ENCODE measurements at regions of chr7 and their contacts with region 1.

Region 1: DNA sequence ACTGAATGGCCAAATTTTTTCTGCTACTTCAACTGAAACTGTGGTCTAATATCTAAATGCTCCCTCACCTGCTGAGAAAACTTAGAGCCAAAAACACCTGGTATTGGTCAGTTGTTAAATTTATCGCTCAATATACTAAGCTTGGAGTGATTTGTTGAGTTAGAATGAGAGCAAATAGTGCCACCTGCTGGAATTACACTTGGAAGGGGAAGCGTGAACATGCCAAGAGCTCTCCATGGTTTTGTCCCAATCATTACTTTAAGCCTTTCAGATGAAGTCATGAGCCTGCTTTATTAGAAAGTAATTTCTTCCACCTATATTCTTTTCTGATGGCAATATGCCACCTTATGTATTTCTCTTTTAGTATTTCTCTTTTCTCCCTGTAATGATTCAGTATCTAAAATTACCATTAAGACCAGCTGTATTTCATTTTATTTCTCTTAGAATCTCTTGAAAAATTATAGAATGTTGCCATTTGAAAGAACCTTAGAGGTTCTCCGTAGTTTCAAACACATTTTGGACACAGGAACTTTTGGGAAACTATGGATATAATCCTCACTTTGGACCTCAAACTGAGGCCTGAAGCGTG is 447.8 kb upstream of the C7orf33 start:
- DNase-seq: peak; percentile 62
- H3K4me3 ChIP-seq: no peak overlapping the region
- H3K27ac ChIP-seq: no peak overlapping the region
- H3K4me1 ChIP-seq: peaks cover 0 to 16% of the 10 kb centered on the region in 2 experiments; a peak in 1 of 4 replicates
- H3K27me3 ChIP-seq: no peaks in the 10 kb centered on the region
- CTCF ChIP-seq: peak; percentile 95
- EP300 ChIP-seq: peak in 1 of 2 experiments; percentile 17; a peak in 1 of 4 replicates
- RAD21 ChIP-seq: peak; percentile 95

Region 2: DNA sequence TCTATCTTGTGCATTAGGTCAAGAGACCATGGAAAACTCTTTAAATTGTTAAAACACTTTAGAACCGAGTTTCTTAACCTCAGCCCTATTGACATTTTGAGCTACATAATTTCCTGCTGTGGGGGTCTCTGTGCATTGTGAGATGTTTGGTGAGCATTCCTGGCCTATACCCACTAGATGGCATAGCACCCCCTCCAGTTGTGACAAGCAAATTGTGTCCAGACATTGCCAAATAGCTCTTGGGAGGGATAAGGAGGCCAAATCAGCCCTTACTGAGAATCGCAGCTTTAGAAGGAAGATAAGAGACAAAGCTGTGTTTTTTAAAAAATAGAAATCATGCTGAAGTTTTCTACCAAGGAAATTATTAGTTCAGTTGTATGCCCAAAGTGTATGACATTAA is 710.7 kb before region 1 on chr7:
- CTCF ChIA-PET with region 1: interaction called, 68 read pairs
- POLR2A ChIA-PET with region 1: no interaction called
- DNase-seq: peak; percentile 61
- H3K4me3 ChIP-seq: no peak overlapping the region
- H3K27ac ChIP-seq: peak overlapping the region; percentile 20 to 23; a peak in 3 of 4 replicates
- H3K4me1 ChIP-seq: peaks cover 8 to 9% of the 10 kb centered on the region in 2 experiments; a peak in 3 of 4 replicates
- H3K27me3 ChIP-seq: no peaks in the 10 kb centered on the region
- CTCF ChIP-seq: peak; percentile 85
- EP300 ChIP-seq: 0 out of 4 replicates have a peak, but pooled peaks of 1 of the 2 experiments have one; percentile 11
- RAD21 ChIP-seq: peak; percentile 98

Region 3: DNA sequence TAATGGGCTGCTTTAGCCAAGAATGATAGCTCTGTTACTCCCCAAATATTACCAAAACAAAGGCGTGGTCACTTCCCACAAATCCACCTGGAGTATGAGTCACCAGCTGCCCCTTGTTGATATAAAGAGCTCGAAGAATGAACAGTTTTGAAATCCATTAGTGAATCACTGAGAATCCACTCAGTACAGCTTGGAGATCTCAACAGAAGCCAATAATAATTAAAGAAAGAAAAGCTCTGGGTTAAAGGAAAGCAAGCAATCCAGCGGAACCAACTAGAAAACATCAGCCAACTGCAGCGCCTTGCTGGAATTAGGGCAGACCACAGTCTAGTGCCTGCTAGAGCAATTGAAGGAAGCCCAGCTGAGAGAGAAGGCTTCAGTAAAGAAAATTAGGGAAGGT is 128.2 kb before region 1 on chr7:
- CTCF ChIA-PET with region 1: no interaction called
- POLR2A ChIA-PET with region 1: no interaction called
- DNase-seq: no peak
- H3K4me3 ChIP-seq: no peak overlapping the region
- H3K27ac ChIP-seq: no peak overlapping the region
- H3K4me1 ChIP-seq: no peaks in the 10 kb centered on the region; a peak in 1 of 4 replicates
- H3K27me3 ChIP-seq: no peaks in the 10 kb centered on the region
- CTCF ChIP-seq: no peak
- EP300 ChIP-seq: no peak
- RAD21 ChIP-seq: no peak

Region 4: GRCh38 chr7:148091882-148092281 is 50.9 kb before region 1 on chr7:
- CTCF ChIA-PET with region 1: interaction called, 10 read pairs
- POLR2A ChIA-PET with region 1: no interaction called
- DNase-seq: no peak
- H3K4me3 ChIP-seq: no peak overlapping the region
- H3K27ac ChIP-seq: no peak overlapping the region
- H3K4me1 ChIP-seq: no peaks in the 10 kb centered on the region
- H3K27me3 ChIP-seq: no peaks in the 10 kb centered on the region
- CTCF ChIP-seq: no peak
- EP300 ChIP-seq: no peak
- RAD21 ChIP-seq: no peak

Region 5: DNA sequence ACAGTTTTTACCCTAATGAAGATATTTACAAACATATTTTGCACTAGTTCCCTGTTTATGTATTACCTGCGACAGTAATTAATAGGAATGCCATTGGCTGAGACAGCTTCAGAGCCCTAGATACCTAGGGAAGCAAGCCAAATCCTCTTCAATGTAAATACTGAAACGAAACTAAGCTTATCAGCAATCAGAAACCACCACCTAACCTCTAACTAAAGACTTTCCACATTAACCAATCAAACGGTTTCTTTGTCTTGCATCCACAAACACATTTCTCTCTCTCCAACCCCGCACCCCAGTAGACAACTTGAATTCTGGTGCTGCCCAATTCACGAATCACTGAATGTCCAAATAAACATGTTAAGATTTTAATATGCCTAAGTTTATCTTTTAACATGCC is 26.6 kb before region 1 on chr7:
- CTCF ChIA-PET with region 1: interaction called, 20 read pairs
- POLR2A ChIA-PET with region 1: no interaction called
- DNase-seq: no peak
- H3K4me3 ChIP-seq: no peak overlapping the region
- H3K27ac ChIP-seq: no peak overlapping the region
- H3K4me1 ChIP-seq: peaks cover 0 to 7% of the 10 kb centered on the region in 2 experiments; a peak in 2 of 4 replicates
- H3K27me3 ChIP-seq: no peaks in the 10 kb centered on the region
- CTCF ChIP-seq: no peak
- EP300 ChIP-seq: no peak
- RAD21 ChIP-seq: no peak

Region 6: DNA sequence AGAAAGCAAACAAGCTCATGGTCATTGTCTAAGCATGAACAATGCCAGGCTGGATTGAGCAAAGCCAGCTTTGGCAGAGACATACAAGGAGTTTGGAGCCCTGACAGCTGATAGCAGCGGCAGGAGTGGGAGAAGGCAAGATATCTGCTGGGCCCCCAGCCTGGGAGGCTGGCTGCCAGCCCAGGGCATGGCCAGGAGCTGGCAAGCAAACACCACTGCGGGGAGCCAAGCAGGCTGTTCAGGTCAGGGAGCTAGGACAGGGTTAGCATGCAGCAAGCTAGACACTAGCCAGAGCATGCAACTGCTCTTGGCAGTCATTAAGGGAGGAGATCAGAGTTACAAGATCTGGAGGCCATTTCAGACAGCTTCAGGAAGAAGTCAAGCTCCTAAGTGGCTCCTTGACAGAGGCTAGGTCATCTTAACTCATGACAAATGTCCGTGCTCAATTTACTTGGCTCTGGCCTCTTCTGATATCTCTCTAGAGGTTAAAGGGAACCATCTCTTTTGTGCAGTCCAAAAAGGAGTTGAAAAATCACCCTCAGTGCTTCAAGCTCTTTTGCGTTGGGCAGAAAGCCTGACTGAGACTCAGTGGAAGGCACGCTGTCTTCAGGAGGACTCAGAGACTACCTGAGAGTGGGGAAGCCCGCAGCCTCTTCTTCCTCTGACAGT is 11.0 kb after region 1 on chr7:
- CTCF ChIA-PET with region 1: interaction called, 34 read pairs
- POLR2A ChIA-PET with region 1: no interaction called
- DNase-seq: peak; percentile 48
- H3K4me3 ChIP-seq: no peak overlapping the region
- H3K27ac ChIP-seq: peak overlapping the region in 1 of 2 experiments; percentile 90; a peak in 2 of 4 replicates
- H3K4me1 ChIP-seq: peaks cover 7 to 28% of the 10 kb centered on the region in 2 experiments; a peak in 2 of 4 replicates
- H3K27me3 ChIP-seq: no peaks in the 10 kb centered on the region
- CTCF ChIP-seq: no peak
- EP300 ChIP-seq: peak; percentile 11 to 26; a peak in 2 of 4 replicates
- RAD21 ChIP-seq: no peak

Region 7: DNA sequence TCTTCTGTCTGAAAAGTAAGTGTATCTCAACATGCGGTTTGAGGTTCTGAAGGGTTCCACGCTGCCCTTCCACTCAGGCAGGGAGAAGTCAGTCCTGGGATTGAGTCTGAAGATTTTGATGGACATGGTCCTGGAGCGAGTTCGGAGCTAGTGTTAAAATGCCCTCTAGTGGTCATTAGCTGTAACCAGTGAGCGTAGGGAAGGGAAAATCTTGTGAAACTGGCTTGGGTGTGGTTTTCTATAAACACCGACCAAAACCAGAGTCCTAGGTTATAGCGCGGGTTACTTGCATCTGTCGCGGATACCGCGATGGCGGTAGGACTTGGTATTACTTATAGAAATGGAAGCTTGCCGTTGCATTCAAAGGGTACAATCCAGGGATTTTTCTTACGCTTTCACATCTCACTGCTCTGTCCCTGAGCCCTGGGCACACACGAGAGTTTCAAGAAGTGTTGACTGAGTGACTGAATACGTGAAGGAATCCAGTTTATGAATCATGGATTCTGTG is 99.6 kb after region 1 on chr7:
- CTCF ChIA-PET with region 1: interaction called, 17 read pairs
- POLR2A ChIA-PET with region 1: no interaction called
- DNase-seq: peak; percentile 67
- H3K4me3 ChIP-seq: peak overlapping the region in 1 of 2 experiments; percentile 16; a peak in 1 of 4 replicates
- H3K27ac ChIP-seq: no peak overlapping the region
- H3K4me1 ChIP-seq: no peaks in the 10 kb centered on the region; a peak in 1 of 4 replicates
- H3K27me3 ChIP-seq: no peaks in the 10 kb centered on the region
- CTCF ChIP-seq: peak; percentile 98
- EP300 ChIP-seq: no peak
- RAD21 ChIP-seq: peak; percentile 92

Measured in SK-N-SH (cell line).